ENCODE measurements at regions of chr2 and their contacts with region 1.

Region 1: DNA sequence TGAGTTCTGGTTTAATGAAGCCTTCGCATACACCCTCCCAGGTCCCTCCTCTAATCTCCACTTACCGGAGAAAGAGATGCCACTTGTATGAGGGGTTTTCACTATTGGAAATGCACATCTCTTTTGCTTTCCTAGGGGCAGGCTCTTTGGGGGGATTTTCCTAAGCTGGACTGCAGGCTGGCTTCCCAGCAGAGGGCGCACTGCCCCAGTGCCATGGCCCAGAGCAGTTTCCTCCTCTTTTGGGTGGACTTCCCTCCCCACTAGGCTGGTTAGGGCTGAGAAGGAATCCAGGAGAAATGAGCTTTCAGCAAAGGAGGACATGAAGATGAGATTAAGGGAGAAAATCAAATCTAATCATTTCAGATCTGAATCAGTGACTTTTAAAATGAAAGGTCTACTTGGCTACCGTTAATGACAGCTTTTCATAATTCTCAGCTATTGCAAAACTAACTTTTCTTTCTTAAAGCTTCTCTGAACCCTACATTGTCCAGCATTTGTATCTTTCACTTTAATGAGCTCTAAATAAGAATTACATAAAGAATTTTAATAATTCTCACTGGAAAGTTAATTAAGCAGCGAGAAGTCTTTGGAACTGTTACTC is 784.1 kb upstream of the FANCL start:
- DNase-seq: no peak
- H3K4me3 ChIP-seq: no peak overlapping the region
- H3K27ac ChIP-seq: no peak overlapping the region
- H3K4me1 ChIP-seq: peaks cover 0 to 4% (median 0%) of the 10 kb centered on the region in 4 donors
- H3K27me3 ChIP-seq: no peaks in the 10 kb centered on the region
- CTCF ChIP-seq: peak in 3 of 4 experiments; percentile 31 to 64 (median 54)
- EP300 ChIP-seq: no peak
- POLR2A ChIP-seq: no peak

Region 2: GRCh38 chr2:59296279-59296678 is 271.0 kb after region 1 on chr2:
- intact Hi-C with region 1: loop called (anchors 10 kb)
- DNase-seq: no peak
- H3K4me3 ChIP-seq: no peak overlapping the region
- H3K27ac ChIP-seq: no peak overlapping the region
- H3K4me1 ChIP-seq: peaks cover 0 to 18% (median 14%) of the 10 kb centered on the region in 4 donors
- H3K27me3 ChIP-seq: no peaks in the 10 kb centered on the region
- CTCF ChIP-seq: no peak
- EP300 ChIP-seq: no peak
- POLR2A ChIP-seq: no peak